CD4-positive, alpha-beta memory T cell (primary cell): ENCODE measurements at regions of chr2 and their contacts with region 1.

Region 1: GRCh38 chr2:196225213-196225612 is 53.8 kb upstream of the STK17B start:
- DNase-seq: no peak
- H3K4me3 ChIP-seq: no peak overlapping the region
- H3K4me3 Mint-ChIP-seq: peak overlapping the region in 3 of 8 donors; percentile 33 to 57 (median 41)
- H3K27ac ChIP-seq: no peak overlapping the region
- H3K27ac Mint-ChIP-seq: peak overlapping the region in 5 of 7 donors; percentile 1 to 68 (median 54)
- H3K4me1 ChIP-seq: peaks cover 79% of the 10 kb centered on the region
- H3K4me1 Mint-ChIP-seq: peaks cover 51 to 85% (median 69%) of the 10 kb centered on the region in 4 donors
- H3K27me3 ChIP-seq: no peaks in the 10 kb centered on the region
- H3K27me3 Mint-ChIP-seq: no peaks in the 10 kb centered on the region

Region 2: GRCh38 chr2:196076778-196077568 is 148.2 kb before region 1 on chr2:
- CTCF ChIA-PET with region 1: interaction called, 129 read pairs
- POLR2A ChIA-PET with region 1: interaction called, 13 read pairs
- intact Hi-C with region 1: loop called (anchors 1 kb)
- DNase-seq: no peak
- H3K4me3 ChIP-seq: no peak overlapping the region
- H3K4me3 Mint-ChIP-seq: no peak overlapping the region
- H3K27ac ChIP-seq: no peak overlapping the region
- H3K27ac Mint-ChIP-seq: no peak overlapping the region
- H3K4me1 ChIP-seq: peaks cover 25% of the 10 kb centered on the region
- H3K4me1 Mint-ChIP-seq: peaks cover 14 to 22% (median 16%) of the 10 kb centered on the region in 4 donors
- H3K27me3 ChIP-seq: no peaks in the 10 kb centered on the region
- H3K27me3 Mint-ChIP-seq: no peaks in the 10 kb centered on the region

Region 3: GRCh38 chr2:196131384-196131937 is 93.8 kb before region 1 on chr2:
- CTCF ChIA-PET with region 1: interaction called, 16 read pairs
- POLR2A ChIA-PET with region 1: interaction called, 11 read pairs
- intact Hi-C with region 1: loop called (anchors 1 kb)
- DNase-seq: peak; percentile 50 to 64 (median 60)
- H3K4me3 ChIP-seq: no peak overlapping the region
- H3K4me3 Mint-ChIP-seq: peak overlapping the region in 6 of 8 donors; percentile 6 to 62 (median 34)
- H3K27ac ChIP-seq: peak overlapping the region; percentile 33
- H3K27ac Mint-ChIP-seq: peak overlapping the region in 6 of 7 donors; percentile 66 to 94 (median 89)
- H3K4me1 ChIP-seq: peaks cover 12% of the 10 kb centered on the region
- H3K4me1 Mint-ChIP-seq: peaks cover 3 to 18% (median 10%) of the 10 kb centered on the region in 4 donors
- H3K27me3 ChIP-seq: no peaks in the 10 kb centered on the region
- H3K27me3 Mint-ChIP-seq: no peaks in the 10 kb centered on the region

Region 4: GRCh38 chr2:196143730-196144131 is 81.5 kb before region 1 on chr2:
- CTCF ChIA-PET with region 1: interaction called, 14 read pairs
- POLR2A ChIA-PET with region 1: no interaction called
- intact Hi-C with region 1: no loop called
- DNase-seq: no peak
- H3K4me3 ChIP-seq: no peak overlapping the region
- H3K4me3 Mint-ChIP-seq: peak overlapping the region in 5 of 8 donors; percentile 13 to 74 (median 59)
- H3K27ac ChIP-seq: no peak overlapping the region
- H3K27ac Mint-ChIP-seq: peak overlapping the region; percentile 44 to 89 (median 81)
- H3K4me1 ChIP-seq: peaks cover 72% of the 10 kb centered on the region
- H3K4me1 Mint-ChIP-seq: peaks cover 41 to 77% (median 60%) of the 10 kb centered on the region in 4 donors
- H3K27me3 ChIP-seq: no peaks in the 10 kb centered on the region
- H3K27me3 Mint-ChIP-seq: no peaks in the 10 kb centered on the region

Region 5: GRCh38 chr2:196205881-196206435 is 19.3 kb before region 1 on chr2:
- CTCF ChIA-PET with region 1: interaction called, 8 read pairs
- POLR2A ChIA-PET with region 1: interaction called, 17 read pairs
- intact Hi-C with region 1: no loop called
- DNase-seq: no peak
- H3K4me3 ChIP-seq: no peak overlapping the region
- H3K4me3 Mint-ChIP-seq: no peak overlapping the region
- H3K27ac ChIP-seq: no peak overlapping the region
- H3K27ac Mint-ChIP-seq: peak overlapping the region in 3 of 7 donors; percentile 14 to 85 (median 24)
- H3K4me1 ChIP-seq: peaks cover 53% of the 10 kb centered on the region
- H3K4me1 Mint-ChIP-seq: peaks cover 46 to 55% (median 49%) of the 10 kb centered on the region in 4 donors
- H3K27me3 ChIP-seq: no peaks in the 10 kb centered on the region
- H3K27me3 Mint-ChIP-seq: no peaks in the 10 kb centered on the region

Region 6: GRCh38 chr2:196263181-196263747 is 38.1 kb after region 1 on chr2:
- CTCF ChIA-PET with region 1: interaction called, 14 read pairs
- POLR2A ChIA-PET with region 1: interaction called, 18 read pairs
- intact Hi-C with region 1: loop called (anchors 5 kb)
- DNase-seq: peak; percentile 72 to 82 (median 78)
- H3K4me3 ChIP-seq: peak overlapping the region in 1 of 2 donors; percentile 33
- H3K4me3 Mint-ChIP-seq: peak overlapping the region; percentile 63 to 91 (median 79)
- H3K27ac ChIP-seq: peak overlapping the region; percentile 78
- H3K27ac Mint-ChIP-seq: peak overlapping the region; percentile 85 to 99 (median 97)
- H3K4me1 ChIP-seq: peaks cover 93% of the 10 kb centered on the region
- H3K4me1 Mint-ChIP-seq: peaks cover 59 to 83% (median 71%) of the 10 kb centered on the region in 4 donors
- H3K27me3 ChIP-seq: no peaks in the 10 kb centered on the region
- H3K27me3 Mint-ChIP-seq: no peaks in the 10 kb centered on the region

Region 7: DNA sequence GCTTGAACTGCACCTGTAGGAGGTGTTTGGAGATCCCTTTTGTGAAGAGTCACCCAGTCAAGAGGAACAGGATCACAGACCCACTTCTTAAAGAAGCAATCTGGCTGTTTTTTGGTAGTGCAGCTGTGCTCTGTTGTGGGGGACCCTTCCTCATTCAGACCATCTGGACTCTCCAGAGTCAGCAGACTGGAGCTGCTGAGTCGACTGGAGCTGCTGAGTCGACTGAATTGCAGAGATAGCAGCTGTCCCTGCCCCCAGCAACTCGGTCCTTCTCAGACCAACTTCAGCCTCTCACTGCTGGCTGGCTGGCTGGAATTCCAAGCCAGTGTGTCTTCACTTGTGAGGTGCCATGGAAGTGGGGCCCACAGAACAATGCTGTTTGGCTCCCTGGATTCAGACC is 517.5 kb after region 1 on chr2:
- CTCF ChIA-PET with region 1: no interaction called
- POLR2A ChIA-PET with region 1: no interaction called
- intact Hi-C with region 1: no loop called
- DNase-seq: no peak
- H3K4me3 ChIP-seq: no peak overlapping the region
- H3K4me3 Mint-ChIP-seq: no peak overlapping the region
- H3K27ac ChIP-seq: no peak overlapping the region
- H3K27ac Mint-ChIP-seq: no peak overlapping the region
- H3K4me1 ChIP-seq: no peaks in the 10 kb centered on the region
- H3K4me1 Mint-ChIP-seq: no peaks in the 10 kb centered on the region
- H3K27me3 ChIP-seq: no peaks in the 10 kb centered on the region
- H3K27me3 Mint-ChIP-seq: no peaks in the 10 kb centered on the region

Region 8: DNA sequence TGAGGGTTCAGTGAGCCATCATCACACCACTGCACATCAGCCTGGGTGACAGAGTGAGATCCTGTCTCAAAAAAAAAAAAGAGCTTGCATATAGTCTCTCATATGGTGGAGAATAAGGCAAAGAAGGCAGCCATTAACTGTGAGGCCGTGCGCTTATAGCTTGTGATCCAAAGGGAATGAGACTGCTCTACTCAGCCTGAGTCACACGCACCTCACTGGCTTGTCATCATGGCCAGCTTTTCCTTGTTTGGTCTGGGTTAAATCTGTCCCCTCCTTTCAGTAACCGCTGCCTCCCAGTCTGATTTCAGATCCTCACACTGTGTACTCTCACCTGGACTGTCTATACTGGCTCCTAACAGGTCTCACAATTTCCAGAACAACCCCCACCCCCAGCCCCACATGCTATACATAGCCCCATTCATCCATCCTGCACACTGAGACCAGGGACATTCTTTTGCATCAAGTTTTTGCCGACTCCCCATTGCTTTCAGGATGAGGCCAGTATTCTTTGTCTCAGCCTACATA is 1120.7 kb after region 1 on chr2:
- CTCF ChIA-PET with region 1: no interaction called
- POLR2A ChIA-PET with region 1: no interaction called
- intact Hi-C with region 1: no loop called
- DNase-seq: no peak
- H3K4me3 ChIP-seq: no peak overlapping the region
- H3K4me3 Mint-ChIP-seq: no peak overlapping the region
- H3K27ac ChIP-seq: no peak overlapping the region
- H3K27ac Mint-ChIP-seq: peak overlapping the region in 2 of 7 donors; percentile 1 to 70
- H3K4me1 ChIP-seq: no peaks in the 10 kb centered on the region
- H3K4me1 Mint-ChIP-seq: peaks cover 5 to 7% (median 5%) of the 10 kb centered on the region in 4 donors
- H3K27me3 ChIP-seq: no peaks in the 10 kb centered on the region
- H3K27me3 Mint-ChIP-seq: no peaks in the 10 kb centered on the region